GM12878 (cell line): ENCODE measurements at regions of chrX and their contacts with region 1.

Region 1: DNA sequence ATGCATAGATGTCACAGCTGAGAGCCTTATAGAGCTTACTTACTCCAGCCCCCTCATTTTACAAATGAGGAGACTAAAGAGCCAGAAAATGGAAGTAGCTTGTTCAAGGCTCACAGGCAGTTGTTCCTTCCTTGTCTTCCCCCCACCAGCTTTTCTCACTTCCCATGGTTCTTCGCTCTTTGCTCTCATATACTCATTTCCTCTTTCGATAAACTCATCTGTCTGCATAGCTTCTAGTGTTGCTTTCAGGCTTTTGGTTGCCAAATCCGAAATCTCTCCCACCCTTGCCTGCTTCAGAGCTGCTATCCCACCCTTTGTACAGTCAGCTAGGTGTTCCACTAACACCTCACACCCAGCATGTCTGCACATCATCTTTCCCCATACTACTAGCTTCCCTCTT is 25.0 kb upstream of the GJB1 start:
- DNase-seq: peak; percentile 56
- ATAC-seq: peak; percentile 85
- H3K4me3 ChIP-seq: peak overlapping the region; percentile 69
- H3K27ac ChIP-seq: peak overlapping the region; percentile 72
- H3K4me1 ChIP-seq: no peaks in the 10 kb centered on the region
- H3K27me3 ChIP-seq: no peaks in the 10 kb centered on the region
- CTCF ChIP-seq: no peak
- EP300 ChIP-seq: no peak
- POLR2A ChIP-seq: no peak
- RAD21 ChIP-seq: no peak

Region 2: GRCh38 chrX:71111141-71111843 is 86.8 kb before region 1 on chrX and contains the start of gene IL2RG:
- CTCF ChIA-PET with region 1: no interaction called
- POLR2A ChIA-PET with region 1: interaction called, 12 read pairs
- RAD21 ChIA-PET with region 1: interaction called, 8 read pairs
- SMC1A ChIA-PET with region 1: interaction called, 5 read pairs
- in situ Hi-C with region 1: no loop called
- intact Hi-C with region 1: no loop called
- DNase-seq: peak; percentile 87
- ATAC-seq: peak; percentile 88
- H3K4me3 ChIP-seq: peak within 1 kb of the TSS; percentile 84
- H3K27ac ChIP-seq: peak within 1 kb of the TSS; percentile 82
- H3K4me1 ChIP-seq: peaks cover 11% of the 10 kb centered on the region
- H3K27me3 ChIP-seq: no peaks in the 10 kb centered on the region
- CTCF ChIP-seq: no peak
- EP300 ChIP-seq: peak in 1 of 2 experiments; percentile 62; a peak in 1 of 4 replicates
- POLR2A ChIP-seq: peak; percentile 91
- RAD21 ChIP-seq: no peak
- polyA plus RNA-seq, gene IL2RG: 135 to 138 TPM

Region 3: GRCh38 chrX:71162981-71163380 is 35.1 kb before region 1 on chrX:
- CTCF ChIA-PET with region 1: no interaction called
- POLR2A ChIA-PET with region 1: no interaction called
- RAD21 ChIA-PET with region 1: no interaction called
- SMC1A ChIA-PET with region 1: no interaction called
- in situ Hi-C with region 1: no loop called
- intact Hi-C with region 1: no loop called
- DNase-seq: no peak
- ATAC-seq: no peak
- H3K4me3 ChIP-seq: no peak overlapping the region
- H3K27ac ChIP-seq: no peak overlapping the region
- H3K4me1 ChIP-seq: no peaks in the 10 kb centered on the region
- H3K27me3 ChIP-seq: no peaks in the 10 kb centered on the region
- CTCF ChIP-seq: no peak
- EP300 ChIP-seq: no peak
- POLR2A ChIP-seq: no peak
- RAD21 ChIP-seq: no peak

Region 4: GRCh38 chrX:71254092-71254941 is 56.3 kb after region 1 on chrX and contains the start of gene ZMYM3:
- CTCF ChIA-PET with region 1: interaction called, 11 read pairs
- POLR2A ChIA-PET with region 1: interaction called, 12 read pairs
- RAD21 ChIA-PET with region 1: interaction called, 6 read pairs
- SMC1A ChIA-PET with region 1: interaction called, 4 read pairs
- in situ Hi-C with region 1: no loop called
- intact Hi-C with region 1: loop called (anchors 2 kb)
- DNase-seq: peak; percentile 24
- ATAC-seq: peak; percentile 93
- H3K4me3 ChIP-seq: peak within 1 kb of the TSS; percentile 89
- H3K27ac ChIP-seq: peak within 1 kb of the TSS; percentile 72
- H3K4me1 ChIP-seq: peaks cover 6% of the 10 kb centered on the region; the same call in 1 of the 2 replicates
- H3K27me3 ChIP-seq: no peaks in the 10 kb centered on the region
- CTCF ChIP-seq: no peak
- EP300 ChIP-seq: no peak
- POLR2A ChIP-seq: peak; percentile 69
- RAD21 ChIP-seq: no peak
- polyA plus RNA-seq, gene ZMYM3: 2.3 to 5.1 TPM

Region 5: DNA sequence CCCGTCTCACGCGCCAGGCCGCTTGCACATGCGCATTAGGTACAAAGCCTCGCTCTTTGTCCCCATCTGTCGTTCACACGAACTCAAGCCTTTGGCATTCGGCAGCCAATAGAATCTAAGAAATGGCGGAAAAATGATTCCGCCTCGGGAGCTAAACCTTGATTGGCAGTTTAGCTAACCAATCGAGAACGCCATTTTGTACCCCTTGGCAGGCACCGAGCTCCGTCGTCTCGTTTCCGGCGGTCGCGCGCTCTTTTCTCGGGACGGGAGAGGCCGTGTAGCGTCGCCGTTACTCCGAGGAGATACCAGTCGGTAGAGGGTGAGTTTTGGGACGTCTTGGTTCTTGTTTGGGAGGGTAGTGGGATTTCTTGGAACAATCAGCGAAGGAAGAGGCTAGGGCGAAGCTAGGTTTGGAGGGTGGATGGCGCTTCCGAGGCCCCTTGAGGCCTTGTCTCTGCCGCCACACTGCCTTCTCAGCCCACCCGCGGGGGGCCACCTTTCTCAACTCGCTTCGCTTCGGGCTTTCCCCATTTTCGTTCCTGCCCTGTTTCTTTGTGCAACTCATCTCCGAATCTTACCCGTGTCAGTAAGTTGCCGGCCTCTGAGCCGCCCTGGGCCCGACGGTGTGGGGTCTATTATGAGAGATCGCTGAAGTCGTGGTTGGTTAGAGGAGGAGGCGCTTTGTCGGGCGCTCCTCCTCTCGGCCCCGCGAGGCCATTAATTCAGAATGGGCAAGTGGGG is 85.5 kb after region 1 on chrX and contains the start of gene NONO:
- CTCF ChIA-PET with region 1: no interaction called
- POLR2A ChIA-PET with region 1: interaction called, 6 read pairs
- RAD21 ChIA-PET with region 1: interaction called, 7 read pairs
- SMC1A ChIA-PET with region 1: interaction called, 5 read pairs
- in situ Hi-C with region 1: no loop called
- intact Hi-C with region 1: loop called (anchors 2 kb)
- DNase-seq: peak; percentile 90
- ATAC-seq: peak; percentile 85
- H3K4me3 ChIP-seq: peak within 1 kb of the TSS; percentile 78
- H3K27ac ChIP-seq: peak within 1 kb of the TSS; percentile 91
- H3K4me1 ChIP-seq: peaks cover 4% of the 10 kb centered on the region
- H3K27me3 ChIP-seq: no peaks in the 10 kb centered on the region
- CTCF ChIP-seq: peak in 1 of 3 experiments; percentile 20; a peak in 1 of 6 replicates
- EP300 ChIP-seq: no peak
- POLR2A ChIP-seq: peak; percentile 88
- RAD21 ChIP-seq: no peak
- polyA plus RNA-seq, gene NONO: 206 to 359 TPM

Region 6: GRCh38 chrX:71532753-71533425 is 334.8 kb after region 1 on chrX and contains the start of gene OGT:
- CTCF ChIA-PET with region 1: no interaction called
- POLR2A ChIA-PET with region 1: no interaction called
- RAD21 ChIA-PET with region 1: no interaction called
- SMC1A ChIA-PET with region 1: no interaction called
- in situ Hi-C with region 1: loop called (anchors 10 kb)
- intact Hi-C with region 1: no loop called
- DNase-seq: peak; percentile 79
- ATAC-seq: peak; percentile 86
- H3K4me3 ChIP-seq: peak within 1 kb of the TSS; percentile 71
- H3K27ac ChIP-seq: peak within 1 kb of the TSS; percentile 83
- H3K4me1 ChIP-seq: 0 out of 2 replicates have a peak, but pooled peaks cover 3% of the 10 kb centered on the region
- H3K27me3 ChIP-seq: no peaks in the 10 kb centered on the region
- CTCF ChIP-seq: no peak
- EP300 ChIP-seq: peak in 1 of 2 experiments; percentile 49; a peak in 1 of 4 replicates
- POLR2A ChIP-seq: peak; percentile 82
- RAD21 ChIP-seq: no peak
- polyA plus RNA-seq, gene OGT: 38.2 to 43.8 TPM